ENCODE measurements at regions of chr7 and their contacts with region 1.

Region 1: DNA sequence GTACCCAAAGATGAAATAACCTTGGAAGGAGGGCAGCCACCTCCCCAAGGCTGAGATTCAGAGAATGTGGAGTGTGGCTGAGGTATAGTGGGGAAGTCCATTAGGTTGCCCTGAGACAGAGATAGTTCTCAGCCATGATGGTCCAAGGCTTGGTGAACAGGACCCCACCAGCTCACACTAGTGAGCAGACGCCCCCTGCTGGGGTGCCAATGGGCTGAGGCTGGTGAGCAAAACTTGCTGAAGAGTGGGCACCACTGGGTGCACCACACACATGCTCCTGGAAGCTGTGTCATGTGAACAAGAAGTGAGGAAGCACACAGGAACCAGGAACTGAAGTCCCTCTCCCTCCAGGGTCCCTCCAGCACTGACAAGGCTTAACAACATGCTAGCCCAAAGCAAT is 8.9 kb downstream of the FBXL13 start:
- DNase-seq: peak; percentile 76

Region 2: GRCh38 chr7:102891693-102892261 is 173.9 kb before region 1 on chr7:
- intact Hi-C with region 1: loop called (anchors 10 kb)
- DNase-seq: no peak